ENCODE measurements at regions of chr6 and their contacts with region 1.

Region 1: DNA sequence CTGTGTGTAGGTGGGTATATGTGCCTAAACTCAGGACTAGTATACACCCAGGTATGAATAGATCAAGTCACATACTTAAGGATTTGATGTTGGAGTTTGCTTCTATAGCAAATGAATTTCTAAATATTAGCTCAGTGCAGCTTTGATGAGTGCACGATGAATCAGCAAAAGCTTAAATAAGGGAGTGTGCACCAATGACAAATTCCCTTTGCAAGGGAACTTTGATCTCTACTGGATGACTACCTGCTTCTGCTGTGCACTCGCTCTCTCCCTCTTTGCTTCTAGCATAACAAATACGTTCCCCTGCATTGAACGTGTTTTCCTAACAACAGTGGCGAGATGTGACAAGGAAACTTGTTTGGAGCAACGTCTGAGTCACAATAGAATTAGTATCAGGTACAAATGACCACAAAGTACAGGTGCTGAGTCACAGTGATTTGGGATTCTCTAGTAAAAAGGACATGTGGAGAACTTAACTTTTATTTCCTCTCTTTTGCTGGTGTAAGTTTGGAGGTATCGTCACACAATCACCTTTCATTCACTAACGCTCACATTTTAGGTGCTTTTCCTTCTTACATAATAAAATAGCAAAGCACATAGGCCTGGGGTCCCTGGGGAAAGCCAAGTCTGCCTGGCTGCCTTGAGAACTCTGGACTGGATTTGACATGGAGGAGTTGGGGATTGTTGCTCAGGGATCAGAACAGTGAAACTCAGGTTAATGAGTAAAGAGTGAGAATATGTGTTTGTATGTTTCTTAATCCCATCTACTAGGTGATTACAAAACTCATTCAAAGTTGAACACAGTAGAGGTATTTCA is 49.7 kb downstream of the KLHL31 start:
- DNase-seq: peak; percentile 99
- ATAC-seq: peak; percentile 94
- H3K4me3 ChIP-seq: peak overlapping the region; percentile 29
- H3K27ac ChIP-seq: peak overlapping the region; percentile 93
- H3K4me1 ChIP-seq: peaks cover 61% of the 10 kb centered on the region
- H3K27me3 ChIP-seq: no peaks in the 10 kb centered on the region
- CTCF ChIP-seq: no peak

Region 2: DNA sequence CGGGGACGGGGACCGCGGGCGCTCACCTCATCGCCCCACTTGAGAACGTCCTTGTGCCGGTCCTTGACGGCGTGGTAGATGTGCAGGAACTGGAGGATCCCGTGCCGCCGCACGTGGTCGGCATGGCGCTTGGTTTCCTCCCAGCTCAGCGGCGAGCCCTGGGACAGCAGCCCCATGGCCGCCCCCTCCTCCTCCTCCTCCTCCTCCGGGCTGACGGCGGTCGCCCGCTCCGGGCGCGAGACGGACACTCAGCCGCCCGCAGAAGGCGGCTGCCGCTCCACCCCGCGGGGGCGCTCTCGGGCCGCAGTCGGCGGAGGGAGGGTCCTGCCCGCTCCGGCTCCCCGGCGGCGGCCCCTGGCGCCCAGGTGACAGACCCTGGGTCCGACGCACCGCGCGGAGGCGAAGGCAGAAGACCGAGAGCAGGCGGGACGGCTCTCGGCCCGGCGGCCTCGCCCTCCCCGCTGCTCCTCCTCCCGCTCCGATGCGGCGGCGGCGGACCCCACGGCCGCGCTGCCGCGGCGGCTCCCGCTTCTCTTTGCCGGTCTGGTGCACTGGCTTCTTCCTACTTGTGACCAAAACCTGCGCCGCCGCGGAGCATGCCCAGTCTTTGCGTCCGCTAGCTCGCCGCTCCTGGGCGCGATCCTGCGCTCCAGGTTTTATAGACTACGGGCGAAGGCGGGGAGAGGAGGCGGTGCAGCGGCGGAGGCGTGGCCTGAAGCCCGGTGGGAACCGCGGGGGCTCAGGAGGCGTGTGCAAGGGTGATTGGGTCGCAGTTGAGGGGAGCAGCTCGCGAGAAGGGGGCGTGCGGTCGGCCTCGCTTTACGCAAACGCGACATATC is 71.2 kb before region 1 on chr6 and contains the start of gene GCLC:
- CTCF ChIA-PET with region 1: interaction called, 6 read pairs
- POLR2A ChIA-PET with region 1: interaction called, 3 read pairs
- intact Hi-C with region 1: loop called (anchors 1 kb)
- DNase-seq: peak; percentile 96
- ATAC-seq: peak; percentile 55
- H3K4me3 ChIP-seq: peak within 1 kb of the TSS; percentile 92
- H3K27ac ChIP-seq: peak within 1 kb of the TSS; percentile 56
- H3K4me1 ChIP-seq: peaks cover 42% of the 10 kb centered on the region
- H3K27me3 ChIP-seq: no peaks in the 10 kb centered on the region
- CTCF ChIP-seq: peak; percentile 65
- total RNA-seq, gene GCLC: 50.1 and 54.7 TPM in 2 replicates

Region 3: DNA sequence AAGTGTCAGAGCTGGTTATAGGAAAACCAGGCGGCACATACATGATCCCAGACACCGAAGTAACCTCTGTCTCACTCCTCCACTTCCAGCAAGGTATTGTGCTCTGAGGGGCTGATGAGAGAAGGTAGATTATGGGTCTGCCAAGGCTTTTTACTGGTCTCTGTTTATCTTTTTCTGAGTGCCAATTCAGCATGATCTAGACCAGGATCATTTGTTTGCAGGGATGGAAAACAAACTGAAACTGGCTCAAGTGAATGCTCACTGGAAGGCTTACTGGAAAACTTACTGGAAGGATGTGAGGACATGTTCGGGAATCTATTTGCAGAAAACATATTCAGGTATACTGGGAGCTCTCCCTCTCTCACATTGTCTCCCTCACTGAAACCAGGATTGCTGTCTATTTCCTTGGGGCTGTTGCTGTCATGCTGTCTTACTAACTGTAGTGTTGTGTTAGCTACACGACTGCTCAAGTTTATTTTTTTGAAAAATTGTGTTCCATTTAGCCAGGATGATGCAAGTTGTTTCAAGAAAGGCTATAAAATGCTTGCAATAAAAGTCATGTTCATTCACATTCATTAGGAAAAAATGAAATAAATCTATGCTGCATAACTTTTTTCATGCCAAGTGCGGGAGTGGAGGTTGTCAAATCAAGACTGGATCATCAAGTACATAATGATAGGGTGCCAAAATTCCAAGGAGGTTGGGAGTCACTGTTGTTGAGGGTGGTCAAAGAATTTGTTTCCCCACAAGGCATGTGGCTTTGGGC is 12.7 kb after region 1 on chr6:
- CTCF ChIA-PET with region 1: no interaction called
- POLR2A ChIA-PET with region 1: interaction called, 3 read pairs
- intact Hi-C with region 1: loop called (anchors 2 kb)
- DNase-seq: peak; percentile 98
- ATAC-seq: peak; percentile 79
- H3K4me3 ChIP-seq: peak overlapping the region; percentile 46; the same call in 1 of the 2 replicates
- H3K27ac ChIP-seq: peak overlapping the region; percentile 64
- H3K4me1 ChIP-seq: peaks cover 41% of the 10 kb centered on the region
- H3K27me3 ChIP-seq: no peaks in the 10 kb centered on the region
- CTCF ChIP-seq: no peak

Region 4: GRCh38 chr6:53710788-53711187 is 94.9 kb after region 1 on chr6:
- CTCF ChIA-PET with region 1: no interaction called
- POLR2A ChIA-PET with region 1: no interaction called
- intact Hi-C with region 1: no loop called
- DNase-seq: no peak
- ATAC-seq: no peak
- H3K4me3 ChIP-seq: no peak overlapping the region
- H3K27ac ChIP-seq: no peak overlapping the region
- H3K4me1 ChIP-seq: no peaks in the 10 kb centered on the region
- H3K27me3 ChIP-seq: no peaks in the 10 kb centered on the region
- CTCF ChIP-seq: no peak